Heart left ventricle (tissue), 16 donors: ENCODE measurements at regions of chr13 and their contacts with region 1.

Region 1: DNA sequence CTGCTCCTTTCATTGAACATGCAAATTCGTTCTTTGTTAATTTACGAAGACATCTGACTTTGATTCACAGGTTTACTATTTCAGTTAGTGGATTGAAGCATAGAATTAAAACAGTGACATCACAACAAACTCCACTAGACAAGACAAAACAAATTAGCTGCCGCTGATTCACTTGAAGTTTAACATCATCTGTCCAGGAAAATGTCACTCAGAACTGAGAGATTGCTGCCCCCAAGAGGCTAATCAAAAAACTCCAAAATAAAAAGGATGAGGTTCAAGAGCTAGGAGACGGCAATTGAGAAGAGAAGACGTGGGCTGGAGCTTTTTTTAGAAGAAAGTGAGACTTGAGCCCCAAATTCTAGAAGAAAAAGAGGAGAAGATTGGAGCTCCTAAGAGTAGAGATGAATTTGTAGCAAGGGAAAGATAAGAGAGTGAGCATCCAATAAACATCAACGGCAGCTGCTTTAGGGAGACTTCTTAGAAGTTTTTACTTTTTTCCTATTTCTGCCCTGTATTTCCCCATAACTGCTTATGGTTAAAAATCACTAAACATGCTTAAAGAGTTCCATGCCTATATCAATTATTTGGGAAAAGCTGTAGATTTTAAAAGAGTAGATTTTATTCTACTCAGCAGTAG is 40.8 kb upstream of the TPP2 start:
- DNase-seq: no peak
- ATAC-seq: peak in 1 of 4 donors; percentile 41
- H3K4me3 ChIP-seq: no peak overlapping the region
- H3K27ac ChIP-seq: no peak overlapping the region
- H3K4me1 ChIP-seq: no peaks in the 10 kb centered on the region
- H3K27me3 ChIP-seq: no peaks in the 10 kb centered on the region
- CTCF ChIP-seq: peak in 11 of 12 donors; percentile 33 to 61 (median 48)
- POLR2A ChIP-seq: no peak

Region 2: DNA sequence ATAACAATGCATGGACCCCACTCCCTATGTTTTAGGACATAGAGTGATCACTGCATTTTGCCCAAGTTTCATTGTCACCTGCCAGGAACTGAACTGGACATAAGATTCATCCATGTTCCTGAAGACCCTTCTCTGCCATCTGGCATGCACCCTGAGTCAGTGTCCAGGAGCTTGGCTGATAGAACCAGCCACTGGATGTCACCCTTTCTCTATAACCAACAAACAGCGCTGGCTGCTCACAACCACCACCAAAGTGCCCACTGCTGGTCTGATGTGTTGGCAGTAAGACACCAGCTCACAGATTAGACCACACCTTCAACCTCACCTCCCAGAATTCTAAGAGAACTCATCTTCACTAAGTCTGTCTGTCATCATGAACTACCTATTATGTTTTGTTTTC is 770.2 kb before region 1 on chr13:
- intact Hi-C with region 1: loop called in 1 of 10 experiments (anchors 10 kb)
- DNase-seq: peak in 4 of 5 donors; percentile 21 to 42 (median 32)
- ATAC-seq: peak; percentile 77 to 94 (median 90)
- H3K4me3 ChIP-seq: no peak overlapping the region
- H3K27ac ChIP-seq: no peak overlapping the region
- H3K4me1 ChIP-seq: no peaks in the 10 kb centered on the region
- H3K27me3 ChIP-seq: no peaks in the 10 kb centered on the region
- CTCF ChIP-seq: peak in 11 of 12 donors; percentile 13 to 60 (median 44)
- POLR2A ChIP-seq: no peak

Region 3: DNA sequence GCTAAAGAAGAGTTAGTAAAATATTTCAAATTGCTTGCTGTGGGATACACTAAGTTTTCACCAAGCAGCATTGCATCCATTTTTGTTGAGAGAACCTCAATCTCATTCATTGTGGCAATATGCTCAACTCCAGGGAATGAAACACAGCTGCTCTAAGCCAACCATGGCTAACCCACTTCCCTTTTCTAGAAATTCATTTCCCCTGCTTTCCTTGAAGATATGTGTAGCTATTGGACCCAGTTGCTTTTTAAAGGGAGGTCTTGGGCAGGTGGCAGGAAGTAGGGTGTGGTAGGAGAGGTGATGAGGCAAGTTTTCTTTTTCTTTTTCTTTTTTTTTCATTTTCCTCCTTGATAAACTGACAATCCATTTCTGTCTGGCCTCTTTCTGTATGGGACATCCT is 606.4 kb before region 1 on chr13:
- intact Hi-C with region 1: loop called in 6 of 10 experiments (anchors 5 to 10 kb)
- DNase-seq: no peak
- ATAC-seq: no peak
- H3K4me3 ChIP-seq: no peak overlapping the region
- H3K27ac ChIP-seq: no peak overlapping the region
- H3K4me1 ChIP-seq: peaks cover 0 to 11% (median 0%) of the 10 kb centered on the region in 12 donors
- H3K27me3 ChIP-seq: no peaks in the 10 kb centered on the region
- CTCF ChIP-seq: no peak
- POLR2A ChIP-seq: no peak

Region 4: GRCh38 chr13:102197193-102197592 is 358.8 kb before region 1 on chr13:
- intact Hi-C with region 1: loop called in 1 of 10 experiments (anchors 5 kb)
- DNase-seq: no peak
- ATAC-seq: peak in 2 of 4 donors; percentile 52 to 56
- H3K4me3 ChIP-seq: no peak overlapping the region
- H3K27ac ChIP-seq: no peak overlapping the region
- H3K4me1 ChIP-seq: peaks cover 0 to 1% (median 0%) of the 10 kb centered on the region in 12 donors
- H3K27me3 ChIP-seq: no peaks in the 10 kb centered on the region
- CTCF ChIP-seq: peak in 7 of 12 donors; percentile 12 to 43 (median 34)
- POLR2A ChIP-seq: no peak

Region 5: DNA sequence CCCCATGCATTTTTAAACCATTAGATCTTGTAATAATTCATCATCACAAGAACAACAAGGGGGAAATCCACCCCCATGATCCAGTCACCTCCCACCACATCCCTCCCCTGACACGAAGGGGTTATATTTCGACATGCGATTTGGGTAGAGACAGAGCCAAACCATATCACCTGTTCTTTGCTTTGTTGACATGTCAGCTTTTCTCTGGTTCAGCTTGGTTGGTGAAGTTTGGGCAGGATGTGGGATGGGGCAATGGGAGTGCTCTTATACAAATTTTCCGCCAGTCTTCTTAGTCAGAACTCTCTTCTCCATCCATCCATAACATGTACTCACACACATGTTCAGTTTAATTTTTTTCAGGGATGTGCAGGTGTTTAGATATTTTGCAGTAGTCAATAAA is 53.7 kb after region 1 on chr13:
- intact Hi-C with region 1: no loop called
- DNase-seq: no peak
- ATAC-seq: no peak
- H3K4me3 ChIP-seq: no peak overlapping the region
- H3K27ac ChIP-seq: no peak overlapping the region
- H3K4me1 ChIP-seq: peaks cover 0 to 21% (median 2%) of the 10 kb centered on the region in 12 donors
- H3K27me3 ChIP-seq: no peaks in the 10 kb centered on the region
- CTCF ChIP-seq: no peak
- POLR2A ChIP-seq: no peak

Region 6: GRCh38 chr13:102693781-102694180 is 137.7 kb after region 1 on chr13:
- intact Hi-C with region 1: no loop called
- DNase-seq: no peak
- ATAC-seq: no peak
- H3K4me3 ChIP-seq: no peak overlapping the region
- H3K27ac ChIP-seq: no peak overlapping the region
- H3K4me1 ChIP-seq: peaks cover 0 to under 1% (median 0%) of the 10 kb centered on the region in 12 donors
- H3K27me3 ChIP-seq: peaks cover 0 to 12% (median 0%) of the 10 kb centered on the region in 9 donors
- CTCF ChIP-seq: no peak
- POLR2A ChIP-seq: no peak

Region 7: DNA sequence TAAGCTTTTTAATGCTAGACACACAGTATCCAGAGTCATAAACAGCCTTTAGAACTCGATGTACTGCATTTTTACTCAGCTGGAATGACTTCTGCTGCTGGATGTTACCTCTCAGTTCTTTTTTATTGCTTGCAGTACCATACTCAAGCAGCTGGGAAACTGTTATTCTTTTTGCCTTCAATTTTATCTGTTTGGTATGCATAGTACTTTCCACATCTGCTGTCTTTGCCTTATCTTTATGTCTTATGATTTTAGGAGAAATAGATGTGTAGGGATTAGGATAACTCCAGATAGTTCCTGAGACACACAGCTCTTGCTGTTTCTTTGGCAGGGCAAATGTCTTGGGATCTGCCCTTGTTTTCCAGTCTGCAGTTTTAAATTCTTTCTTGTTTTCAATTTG is 186.1 kb after region 1 on chr13:
- intact Hi-C with region 1: no loop called
- DNase-seq: no peak
- ATAC-seq: no peak
- H3K4me3 ChIP-seq: no peak overlapping the region
- H3K27ac ChIP-seq: no peak overlapping the region
- H3K4me1 ChIP-seq: no peaks in the 10 kb centered on the region
- H3K27me3 ChIP-seq: no peaks in the 10 kb centered on the region
- CTCF ChIP-seq: no peak
- POLR2A ChIP-seq: no peak